Activated T-helper 1 cell treated with anti-CD3 and anti-CD28 coated beads, Interleukin-12 subunit alpha, Interleukin-12 subunit beta, Interleukin-2, Interleukin-4 antibody, amounts not matched to agents 30 ng/mL and 10 ng/mL and 1 ng/mL, durations not matched to agents 14 hours and 24 hours and 36 hours (primary cell): ENCODE measurements at regions of chrX and their contacts with region 1.

Region 1: DNA sequence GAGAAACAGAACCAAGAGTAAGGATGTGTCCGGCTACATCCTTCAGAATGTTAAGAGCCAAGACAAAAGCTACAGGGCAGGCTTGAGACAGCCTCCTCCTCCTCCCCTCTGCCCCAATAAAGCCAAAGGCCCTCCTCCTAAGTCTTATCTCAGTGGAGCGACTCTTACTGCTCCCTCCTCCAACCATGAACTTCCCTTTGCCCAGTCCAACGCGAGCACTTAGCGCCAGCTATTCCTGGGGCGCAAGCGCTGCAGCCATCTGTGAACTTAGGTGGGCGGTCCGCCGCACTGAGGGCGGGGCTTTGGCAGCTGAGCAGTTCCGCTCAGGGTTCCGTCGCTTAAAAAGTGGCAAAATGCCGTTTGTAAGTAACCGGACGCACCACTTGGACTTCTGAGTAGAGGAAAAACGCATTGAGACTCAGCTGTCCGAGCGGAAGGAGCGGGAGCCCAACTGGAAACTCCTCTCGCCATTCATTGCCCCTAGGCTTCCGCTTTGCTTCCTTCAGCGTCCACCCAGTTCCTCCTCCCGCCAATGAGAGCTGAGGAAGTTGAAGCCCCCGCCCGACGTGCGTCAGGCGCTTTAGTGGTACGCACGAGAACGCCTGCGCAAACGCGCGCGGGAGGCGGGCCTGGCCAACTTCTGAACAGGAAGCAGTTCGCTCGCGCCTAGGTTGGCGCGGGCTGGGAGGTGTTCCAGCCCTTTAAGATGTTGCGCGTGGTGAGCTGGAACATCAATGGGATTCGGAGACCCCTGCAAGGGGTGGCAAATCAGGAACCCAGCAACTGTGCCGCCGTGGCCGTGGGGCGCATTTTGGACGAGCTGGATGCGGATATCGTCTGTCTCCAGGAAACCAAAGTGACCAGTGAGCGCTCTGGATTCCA is at the start of gene APEX2:
- DNase-seq: peak; percentile 84
- H3K4me3 Mint-ChIP-seq: peak within 1 kb of the TSS; percentile 96
- H3K27ac Mint-ChIP-seq: peak within 1 kb of the TSS; percentile 91
- H3K4me1 Mint-ChIP-seq: peaks cover 10% of the 10 kb centered on the region
- H3K27me3 Mint-ChIP-seq: no peaks in the 10 kb centered on the region
- total RNA-seq, gene APEX2: 33.9 and 36.8 TPM in 2 replicates

Region 2: DNA sequence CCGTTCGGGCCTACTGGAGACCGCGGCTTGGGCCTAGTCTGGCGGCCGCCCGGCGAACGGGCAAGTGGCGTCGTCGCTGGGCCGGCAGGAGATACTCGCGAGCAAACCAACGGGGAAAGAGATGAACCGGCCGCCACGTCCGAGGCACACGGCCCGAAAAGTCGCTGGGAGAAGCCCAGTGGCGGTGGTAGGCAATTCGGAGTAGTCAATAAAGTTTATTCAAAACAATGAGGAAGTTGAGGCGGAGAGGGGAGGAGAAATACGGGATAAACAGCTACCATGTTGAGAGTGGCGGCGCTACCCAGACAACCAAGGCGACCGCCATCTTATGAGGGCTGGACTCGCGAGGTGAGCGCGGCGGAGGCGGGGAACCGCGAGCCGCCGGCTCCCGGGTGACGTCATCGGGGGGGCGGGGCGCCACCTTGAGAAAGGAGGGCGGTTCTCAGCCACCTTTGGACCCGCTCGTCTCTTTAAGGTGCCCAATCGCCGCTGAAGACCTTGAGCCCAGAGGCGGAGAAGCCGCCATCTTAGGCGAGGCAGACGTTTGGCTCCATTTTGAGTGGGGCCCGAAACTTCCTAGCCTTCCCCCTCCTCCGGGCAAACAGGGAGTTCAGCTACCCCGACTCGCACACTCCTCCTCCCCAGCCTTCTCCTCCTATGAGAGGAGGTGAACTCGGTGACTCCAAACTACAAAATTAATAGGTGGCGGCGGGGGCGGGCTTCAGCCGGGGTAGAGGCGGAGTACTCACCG is 955.7 kb before region 1 on chrX and contains the start of gene PHF8:
- intact Hi-C with region 1: loop called (anchors 1 kb)
- DNase-seq: peak; percentile 91
- H3K4me3 Mint-ChIP-seq: peak within 1 kb of the TSS; percentile 92
- H3K27ac Mint-ChIP-seq: peak within 1 kb of the TSS; percentile 98
- H3K4me1 Mint-ChIP-seq: peaks cover 18% of the 10 kb centered on the region
- H3K27me3 Mint-ChIP-seq: no peaks in the 10 kb centered on the region
- total RNA-seq, gene PHF8: 50.7 and 54.8 TPM in 2 replicates

Region 3: GRCh38 chrX:54439967-54440871 is 559.7 kb before region 1 on chrX and contains the start of gene TSR2:
- intact Hi-C with region 1: loop called (anchors 1 kb)
- DNase-seq: peak; percentile 75
- H3K4me3 Mint-ChIP-seq: peak within 1 kb of the TSS; percentile 96
- H3K27ac Mint-ChIP-seq: peak within 1 kb of the TSS; percentile 83
- H3K4me1 Mint-ChIP-seq: peaks cover 27% of the 10 kb centered on the region
- H3K27me3 Mint-ChIP-seq: no peaks in the 10 kb centered on the region
- total RNA-seq, gene TSR2: 43.6 and 44.1 TPM in 2 replicates

Region 4: GRCh38 chrX:54639346-54640102 is 360.4 kb before region 1 on chrX:
- intact Hi-C with region 1: loop called (anchors 1 kb)
- DNase-seq: peak; percentile 87
- H3K4me3 Mint-ChIP-seq: peak overlapping the region; percentile 93
- H3K27ac Mint-ChIP-seq: peak overlapping the region; percentile 99
- H3K4me1 Mint-ChIP-seq: peaks cover 10% of the 10 kb centered on the region
- H3K27me3 Mint-ChIP-seq: no peaks in the 10 kb centered on the region

Region 5: GRCh38 chrX:54921427-54922021 is 78.4 kb before region 1 on chrX:
- intact Hi-C with region 1: loop called (anchors 2 kb)
- DNase-seq: peak; percentile 11
- H3K4me3 Mint-ChIP-seq: peak overlapping the region; percentile 92
- H3K27ac Mint-ChIP-seq: peak overlapping the region; percentile 61
- H3K4me1 Mint-ChIP-seq: peaks cover 17% of the 10 kb centered on the region
- H3K27me3 Mint-ChIP-seq: peaks cover 11% of the 10 kb centered on the region

Region 6: GRCh38 chrX:54934890-54935289 is 65.1 kb before region 1 on chrX:
- intact Hi-C with region 1: no loop called
- DNase-seq: no peak
- H3K4me3 Mint-ChIP-seq: no peak overlapping the region
- H3K27ac Mint-ChIP-seq: no peak overlapping the region
- H3K4me1 Mint-ChIP-seq: no peaks in the 10 kb centered on the region
- H3K27me3 Mint-ChIP-seq: no peaks in the 10 kb centered on the region

Region 7: DNA sequence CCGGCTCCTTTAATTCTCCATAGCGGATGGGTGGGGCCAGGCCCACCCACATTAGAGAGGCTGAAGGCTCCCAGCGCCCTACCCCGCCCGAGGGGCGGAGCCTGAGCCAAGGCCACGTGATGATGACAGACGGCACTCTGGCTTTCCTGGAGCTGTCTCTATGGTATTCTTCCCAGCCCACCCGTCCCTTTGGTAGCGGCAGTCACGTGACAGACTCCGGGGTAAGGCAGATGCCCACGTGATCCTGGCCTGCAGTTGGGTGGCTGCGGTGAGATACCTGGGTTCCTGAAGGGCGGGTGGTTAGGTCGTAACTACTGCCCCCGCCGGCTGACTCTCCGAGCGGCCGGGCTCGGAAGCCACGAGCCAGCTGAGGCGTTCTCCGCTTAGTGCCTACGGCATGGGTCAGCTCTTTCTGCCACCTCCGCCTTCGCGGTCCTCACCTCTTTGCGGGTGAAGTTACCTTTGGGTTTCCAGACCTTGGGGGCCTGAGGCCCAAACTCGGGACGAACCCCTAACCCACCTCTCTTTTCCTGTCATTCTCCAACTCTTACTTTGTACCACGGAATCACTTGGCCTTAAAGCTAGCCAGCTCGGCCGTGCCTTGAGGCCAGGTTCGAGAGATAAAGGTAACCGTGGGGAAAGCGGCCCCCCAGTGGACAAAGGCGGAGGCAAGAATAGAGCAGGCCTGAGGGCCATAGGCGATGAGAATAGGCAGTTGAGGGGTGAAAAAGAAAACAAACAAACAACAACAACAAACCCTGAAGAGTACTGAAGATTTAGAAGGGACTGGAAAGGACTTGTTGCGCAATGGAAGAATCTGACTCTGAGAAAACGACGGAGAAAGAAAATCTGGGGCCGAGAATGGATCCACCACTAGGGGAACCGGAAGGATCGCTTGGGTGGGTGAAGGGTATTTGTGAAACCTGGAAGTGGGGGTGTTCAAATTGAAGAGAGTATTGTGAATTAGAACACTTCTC is 717.9 kb after region 1 on chrX and contains the start of gene RRAGB:
- intact Hi-C with region 1: loop called (anchors 5 kb)
- DNase-seq: peak; percentile 84
- H3K4me3 Mint-ChIP-seq: peak within 1 kb of the TSS; percentile 89
- H3K27ac Mint-ChIP-seq: peak within 1 kb of the TSS; percentile 73
- H3K4me1 Mint-ChIP-seq: peaks cover 36% of the 10 kb centered on the region
- H3K27me3 Mint-ChIP-seq: no peaks in the 10 kb centered on the region
- total RNA-seq, gene RRAGB: 4.4 and 6.1 TPM in 2 replicates